Tibial artery (tissue), 4 donors: ENCODE measurements at regions of chr12 and their contacts with region 1.

Region 1: DNA sequence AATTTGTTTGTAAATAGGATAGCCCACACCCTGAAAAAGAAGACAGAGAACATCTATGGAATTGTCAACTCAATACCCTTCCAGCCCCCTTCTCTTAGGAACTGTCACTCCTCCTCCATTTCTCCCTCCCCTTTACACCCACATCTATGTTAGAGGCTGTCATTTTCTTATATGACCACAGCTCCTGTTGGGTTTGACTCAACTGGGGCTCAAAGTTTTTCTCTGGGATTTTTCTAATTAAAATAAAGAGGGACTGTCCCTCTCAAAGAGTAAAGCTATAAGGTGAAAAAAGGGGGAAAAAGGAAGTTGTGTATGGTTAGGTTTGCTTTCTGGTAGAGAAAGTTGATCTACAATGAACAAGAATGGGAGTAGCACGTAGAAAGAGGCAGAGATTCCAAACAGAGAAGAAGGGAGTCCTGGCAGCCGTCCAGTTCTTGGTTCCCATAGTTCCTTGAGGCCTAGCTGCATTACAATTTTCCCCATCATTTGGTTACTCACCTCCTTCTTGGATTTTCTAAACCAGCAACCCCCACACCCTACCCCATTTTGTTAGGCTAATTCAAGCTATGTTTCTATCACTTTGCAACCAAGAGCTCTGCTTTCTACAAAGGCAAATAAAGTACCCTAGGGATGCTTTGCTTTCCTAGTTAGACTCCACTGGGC is 44.3 kb upstream of the STK38L start:
- DNase-seq: no peak
- H3K4me3 ChIP-seq: no peak overlapping the region
- H3K27ac ChIP-seq: peak overlapping the region; percentile 83 to 84
- H3K4me1 ChIP-seq: peaks cover 0 to 65% (median 27%) of the 10 kb centered on the region in 4 donors
- H3K27me3 ChIP-seq: no peaks in the 10 kb centered on the region
- CTCF ChIP-seq: no peak

Region 2: DNA sequence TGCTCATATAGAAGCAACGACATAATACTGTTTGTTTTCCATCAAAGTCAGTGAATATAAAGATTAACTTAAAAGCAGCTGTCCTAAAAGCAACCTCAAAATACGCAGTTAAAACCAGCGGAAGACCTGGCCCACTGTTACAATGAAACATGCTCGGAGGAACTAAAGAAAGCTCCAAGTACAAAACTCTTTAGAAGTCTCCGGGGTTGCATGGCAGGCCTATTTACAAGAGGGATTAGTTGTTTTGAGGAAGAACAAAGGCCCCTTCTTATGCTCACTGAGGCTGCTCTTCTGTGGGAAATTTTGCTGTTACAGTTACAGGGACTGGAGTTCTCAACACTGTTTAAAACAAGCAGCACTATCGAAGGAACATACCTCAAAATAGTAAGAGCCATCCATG is 41.5 kb before region 1 on chr12:
- intact Hi-C with region 1: no loop called
- DNase-seq: no peak
- H3K4me3 ChIP-seq: no peak overlapping the region
- H3K27ac ChIP-seq: no peak overlapping the region
- H3K4me1 ChIP-seq: no peaks in the 10 kb centered on the region
- H3K27me3 ChIP-seq: no peaks in the 10 kb centered on the region
- CTCF ChIP-seq: no peak

Region 3: GRCh38 chr12:27243804-27244683 is 44.3 kb after region 1 on chr12 and contains the start of gene STK38L:
- intact Hi-C with region 1: loop called (anchors 5 kb)
- DNase-seq: peak; percentile 94 to 98
- H3K4me3 ChIP-seq: peak within 1 kb of the TSS; percentile 78 to 93
- H3K27ac ChIP-seq: peak within 1 kb of the TSS; percentile 93 to 96
- H3K4me1 ChIP-seq: peaks cover 0 to 25% (median 4%) of the 10 kb centered on the region in 4 donors
- H3K27me3 ChIP-seq: no peaks in the 10 kb centered on the region
- CTCF ChIP-seq: no peak

Region 4: DNA sequence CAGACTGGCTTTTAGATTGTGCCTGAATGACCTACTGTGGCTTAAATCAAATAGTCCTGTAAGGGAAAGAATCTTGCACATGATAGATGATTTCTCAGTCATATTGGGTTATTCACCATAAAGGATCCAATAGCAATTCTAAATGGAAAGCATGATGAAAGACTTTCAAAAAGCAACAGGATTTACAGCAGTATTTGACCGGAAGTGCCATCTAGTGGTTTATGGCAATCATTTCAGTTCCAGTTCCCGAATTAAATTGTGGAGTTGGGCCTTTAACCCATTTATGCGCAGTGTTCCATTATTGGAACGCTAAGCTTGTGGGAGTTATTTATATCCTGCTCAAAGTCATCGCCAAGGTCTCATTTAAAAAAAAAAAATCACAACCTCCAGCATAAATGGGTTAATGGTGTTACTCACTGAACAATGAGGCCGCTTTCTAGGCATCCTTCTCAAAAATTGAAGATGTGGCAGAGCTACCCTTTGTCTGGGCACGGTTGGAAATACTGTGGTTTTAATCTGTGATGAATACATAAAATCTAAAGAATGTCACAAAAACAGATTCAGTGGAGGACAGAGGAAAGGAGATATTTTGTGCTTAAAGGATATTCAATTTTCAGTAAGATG is 435.7 kb after region 1 on chr12:
- intact Hi-C with region 1: no loop called
- DNase-seq: no peak
- H3K4me3 ChIP-seq: no peak overlapping the region
- H3K27ac ChIP-seq: no peak overlapping the region
- H3K4me1 ChIP-seq: peaks cover 0 to 25% (median 5%) of the 10 kb centered on the region in 4 donors
- H3K27me3 ChIP-seq: no peaks in the 10 kb centered on the region
- CTCF ChIP-seq: peak; percentile 67 to 78